Caco-2 (cell line): ENCODE measurements at regions of chr7 and their contacts with region 1.

Region 1: DNA sequence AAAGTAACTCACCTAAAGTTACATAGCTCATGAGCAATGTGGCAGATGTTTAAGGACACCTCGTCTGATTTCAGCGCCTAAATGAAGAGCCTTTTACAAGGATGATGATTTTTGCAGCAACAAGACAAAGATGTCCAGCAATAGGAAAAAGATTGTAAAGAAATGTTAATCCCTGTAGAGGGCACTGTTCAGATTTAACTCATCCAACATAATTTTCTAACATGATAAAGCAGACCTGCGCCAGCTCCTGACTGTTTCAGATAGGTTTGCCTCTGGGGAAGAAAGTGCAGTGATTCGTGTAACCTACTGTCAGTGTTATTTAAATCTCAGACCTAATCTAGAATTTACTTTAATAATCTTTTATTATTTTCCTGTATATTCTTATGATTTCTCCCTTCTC is 595.2 kb downstream of the AUTS2 start:
- DNase-seq: no peak
- H3K4me3 ChIP-seq: no peak overlapping the region
- H3K4me3 Mint-ChIP-seq: no peak overlapping the region
- H3K27ac Mint-ChIP-seq: no peak overlapping the region
- H3K4me1 ChIP-seq: no peaks in the 10 kb centered on the region
- H3K4me1 Mint-ChIP-seq: no peaks in the 10 kb centered on the region
- H3K27me3 ChIP-seq: no peaks in the 10 kb centered on the region
- H3K27me3 Mint-ChIP-seq: no peaks in the 10 kb centered on the region
- CTCF ChIP-seq: peak in 1 of 2 experiments; percentile 19

Region 2: DNA sequence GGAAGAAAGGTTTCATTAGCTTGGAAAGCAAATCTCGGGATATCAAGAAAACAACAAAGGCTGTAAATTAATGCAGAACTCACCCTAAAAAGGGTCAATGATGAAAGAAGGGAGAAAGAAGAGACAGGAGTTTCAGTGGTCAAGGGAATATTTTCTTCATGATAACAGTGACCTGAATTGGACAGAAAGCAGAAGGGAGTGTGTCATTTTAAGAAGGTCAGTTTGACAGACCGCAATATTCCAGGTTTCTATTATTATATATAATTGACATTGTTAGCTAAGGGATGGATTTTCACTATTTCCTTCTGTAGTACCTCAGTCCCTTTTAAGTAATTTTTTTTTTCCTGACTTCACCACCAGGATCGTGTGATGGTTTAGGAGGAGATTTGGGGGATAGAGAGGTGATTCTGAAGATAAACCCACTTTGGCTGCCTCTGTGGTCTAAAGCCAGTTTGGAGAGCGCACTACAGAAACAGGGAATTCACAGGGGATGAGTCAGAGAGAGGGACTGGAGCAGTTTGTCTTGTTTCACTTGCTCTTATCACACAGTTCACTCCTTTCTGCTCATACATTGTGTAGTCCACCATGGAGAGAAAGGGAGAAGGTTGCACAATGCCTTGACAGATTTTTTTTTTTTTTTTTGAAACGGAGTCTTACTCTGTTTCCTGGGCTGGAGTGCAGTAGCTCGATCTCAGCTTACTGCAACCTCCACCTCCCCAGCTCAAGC is 177.3 kb before region 1 on chr7:
- CTCF ChIA-PET with region 1: no interaction called
- POLR2A ChIA-PET with region 1: no interaction called
- intact Hi-C with region 1: no loop called
- DNase-seq: peak in 1 of 2 experiments; percentile 44
- H3K4me3 ChIP-seq: no peak overlapping the region
- H3K4me3 Mint-ChIP-seq: no peak overlapping the region
- H3K27ac Mint-ChIP-seq: no peak overlapping the region
- H3K4me1 ChIP-seq: 0 out of 2 replicates have a peak, but pooled peaks cover 4% of the 10 kb centered on the region
- H3K4me1 Mint-ChIP-seq: peaks cover 7% of the 10 kb centered on the region
- H3K27me3 ChIP-seq: no peaks in the 10 kb centered on the region
- H3K27me3 Mint-ChIP-seq: peaks cover 2% of the 10 kb centered on the region
- CTCF ChIP-seq: no peak

Region 3: GRCh38 chr7:70318511-70318910 is 125.0 kb after region 1 on chr7:
- CTCF ChIA-PET with region 1: interaction called, 11 read pairs
- POLR2A ChIA-PET with region 1: no interaction called
- intact Hi-C with region 1: no loop called
- DNase-seq: no peak
- H3K4me3 ChIP-seq: no peak overlapping the region
- H3K4me3 Mint-ChIP-seq: no peak overlapping the region
- H3K27ac Mint-ChIP-seq: no peak overlapping the region
- H3K4me1 ChIP-seq: no peaks in the 10 kb centered on the region
- H3K4me1 Mint-ChIP-seq: no peaks in the 10 kb centered on the region
- H3K27me3 ChIP-seq: no peaks in the 10 kb centered on the region
- H3K27me3 Mint-ChIP-seq: no peaks in the 10 kb centered on the region
- CTCF ChIP-seq: no peak